Left lung (tissue), 14 donors: ENCODE measurements at regions of chr1 and their contacts with region 1.

Region 1: DNA sequence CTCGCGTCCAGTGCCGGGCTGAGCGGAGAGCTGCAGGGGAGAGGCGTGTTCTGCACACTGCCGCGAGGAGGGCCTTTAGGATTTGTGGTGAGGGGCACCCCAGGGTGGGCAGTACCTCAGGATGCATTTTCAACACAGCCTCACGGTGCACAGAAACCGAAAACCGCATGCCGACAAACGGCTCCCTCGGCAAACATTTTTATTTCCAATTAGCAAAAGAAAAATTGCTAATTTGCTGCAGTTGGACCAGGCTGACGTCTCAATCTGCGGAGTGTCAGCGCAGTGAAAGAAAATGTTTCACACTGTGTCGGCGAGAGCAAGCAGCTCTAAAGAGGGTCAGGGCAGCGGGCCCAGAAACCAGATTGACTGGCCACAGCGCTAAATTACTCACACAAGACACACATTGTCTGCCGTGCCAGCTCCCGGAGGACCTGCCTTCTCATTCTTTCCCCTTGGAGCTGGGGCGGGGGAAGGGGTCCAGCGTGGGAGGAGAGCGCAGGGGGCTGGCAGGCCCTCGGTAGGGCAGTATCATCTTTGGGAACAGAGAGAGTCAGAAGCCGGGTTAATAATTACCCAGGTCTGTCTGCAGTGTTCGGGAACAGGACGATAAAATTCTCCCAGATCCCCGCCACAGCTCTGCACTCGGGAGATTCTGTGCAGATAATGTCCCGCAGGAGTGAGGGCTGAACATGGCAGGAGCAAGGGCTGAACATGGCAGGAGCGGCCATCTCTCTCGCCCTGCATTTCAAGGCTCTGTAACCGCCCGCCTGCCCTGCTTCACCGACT is 150.2 kb downstream of the PRDM16 start:
- DNase-seq: peak in 3 of 4 donors; percentile 59 to 78 (median 76)
- ATAC-seq: peak; percentile 68
- H3K4me3 ChIP-seq: no peak overlapping the region
- H3K27ac ChIP-seq: no peak overlapping the region
- H3K4me1 ChIP-seq: peaks cover 0 to 21% of the 10 kb centered on the region in 2 donors
- H3K27me3 ChIP-seq: peaks cover 0 to 58% of the 10 kb centered on the region in 2 donors
- CTCF ChIP-seq: no peak

Region 2: DNA sequence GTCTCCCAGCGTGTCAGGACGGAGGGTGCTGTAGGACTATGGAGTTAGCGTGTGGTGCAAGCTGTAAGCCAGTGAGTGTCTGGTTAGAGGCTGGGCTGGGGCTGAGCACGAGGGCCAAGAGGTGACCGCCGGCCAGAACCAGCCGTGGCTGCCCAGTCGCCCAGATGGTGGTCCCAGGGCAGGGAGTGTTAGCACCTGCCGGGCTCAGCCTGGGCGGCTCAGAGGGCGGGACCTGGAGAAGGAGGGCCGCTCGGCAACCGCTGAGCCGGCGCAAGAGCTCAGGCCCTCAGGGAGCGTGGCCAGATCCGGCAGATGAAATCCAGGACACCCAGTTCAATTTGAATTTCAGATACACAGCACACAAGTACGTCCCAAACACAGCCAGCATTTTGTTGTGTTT is 62.3 kb before region 1 on chr1:
- intact Hi-C with region 1: loop called in 1 of 2 experiments (anchors 10 kb)
- DNase-seq: no peak
- ATAC-seq: no peak
- H3K4me3 ChIP-seq: no peak overlapping the region
- H3K27ac ChIP-seq: no peak overlapping the region
- H3K4me1 ChIP-seq: no peaks in the 10 kb centered on the region
- H3K27me3 ChIP-seq: peaks cover 0 to 53% of the 10 kb centered on the region in 2 donors
- CTCF ChIP-seq: no peak